Astrocyte of the cerebellum (primary cell): ENCODE measurements at regions of chr21 and their contacts with region 1.

Region 1: DNA sequence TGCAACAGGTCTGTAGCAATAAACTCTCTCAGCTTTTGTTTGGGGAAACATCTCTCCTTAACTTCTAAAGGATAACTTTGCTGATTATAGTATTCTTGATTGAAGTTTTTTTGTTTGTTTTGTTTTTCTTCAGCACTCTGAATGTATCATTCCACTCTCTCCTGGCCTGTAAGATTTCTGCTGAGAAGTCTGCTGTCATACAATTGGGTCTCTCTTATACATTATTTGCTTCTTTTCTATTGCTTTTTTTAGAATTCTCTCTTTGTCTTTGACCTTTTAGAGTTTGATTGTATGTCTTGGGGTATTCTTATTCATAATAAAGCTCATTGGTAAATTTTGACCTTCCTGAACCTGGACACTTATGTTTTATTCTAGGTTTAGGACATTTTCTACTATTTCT is 386.3 kb downstream of the MRPL39 start:
- DNase-seq: no peak
- H3K4me3 ChIP-seq: no peak overlapping the region
- CTCF ChIP-seq: no peak

Region 2: GRCh38 chr21:25191141-25191540 is 29.8 kb before region 1 on chr21:
- in situ Hi-C with region 1: loop called (anchors 5 kb)
- DNase-seq: no peak
- H3K4me3 ChIP-seq: no peak overlapping the region
- CTCF ChIP-seq: no peak